GM13976 (cell line): ENCODE measurements at regions of chr2 and their contacts with region 1.

Region 1: GRCh38 chr2:218406209-218406948 is 6.7 kb downstream of the CTDSP1 start:
- DNase-seq: peak; percentile 94
- CTCF ChIP-seq: peak; percentile 97

Region 2: GRCh38 chr2:217393585-217394032 is 1012.8 kb before region 1 on chr2:
- in situ Hi-C with region 1: no loop called
- DNase-seq: no peak
- CTCF ChIP-seq: no peak

Region 3: GRCh38 chr2:218648088-218648786 is 241.9 kb after region 1 on chr2:
- in situ Hi-C with region 1: loop called (anchors 25 kb)
- DNase-seq: peak; percentile 74
- CTCF ChIP-seq: peak; percentile 79

Region 4: DNA sequence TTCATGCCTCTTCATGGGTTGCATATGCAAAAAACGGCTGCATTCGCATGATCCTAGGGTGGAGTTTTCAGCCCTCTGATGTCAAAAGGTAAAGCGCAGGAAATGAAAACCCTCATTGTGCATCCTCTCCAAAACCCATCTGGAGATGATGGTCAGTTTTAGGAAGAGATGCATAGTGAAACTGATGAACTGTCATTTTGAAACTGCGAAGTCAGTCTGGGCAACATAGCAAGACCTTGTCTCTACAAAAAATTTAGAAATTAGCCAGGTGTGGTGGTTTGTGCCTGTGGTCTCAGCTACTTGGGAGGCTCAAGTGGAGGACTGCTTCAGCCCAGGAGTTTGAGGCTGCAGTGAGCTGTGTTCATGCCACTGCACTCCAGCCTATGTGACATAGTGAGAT is 301.7 kb after region 1 on chr2:
- in situ Hi-C with region 1: no loop called
- DNase-seq: peak; percentile 36
- CTCF ChIP-seq: no peak

Region 5: DNA sequence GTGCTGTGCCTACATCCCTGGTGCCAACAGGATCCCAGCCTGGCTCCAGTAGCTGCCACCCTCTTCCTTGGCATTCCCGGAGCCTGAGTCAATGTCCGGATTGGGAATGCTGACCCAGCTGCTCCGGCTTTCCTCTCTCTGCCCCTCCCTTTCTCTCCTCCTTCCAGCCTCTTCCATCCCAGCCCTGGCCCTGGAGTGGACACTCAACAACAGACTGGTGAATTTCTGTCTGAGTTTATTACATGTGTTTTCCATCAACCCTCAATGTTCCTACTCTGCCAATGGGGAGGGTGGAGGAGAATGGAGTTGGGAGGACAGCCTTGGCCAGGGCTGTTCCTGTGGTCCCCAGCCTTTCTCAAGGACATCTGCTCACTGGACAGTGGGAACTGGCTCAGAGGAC is 426.1 kb after region 1 on chr2:
- in situ Hi-C with region 1: loop called (anchors 25 kb)
- DNase-seq: no peak
- CTCF ChIP-seq: no peak